Transverse colon (tissue), 4 donors: ENCODE measurements at regions of chr1 and their contacts with region 1.

Region 1: DNA sequence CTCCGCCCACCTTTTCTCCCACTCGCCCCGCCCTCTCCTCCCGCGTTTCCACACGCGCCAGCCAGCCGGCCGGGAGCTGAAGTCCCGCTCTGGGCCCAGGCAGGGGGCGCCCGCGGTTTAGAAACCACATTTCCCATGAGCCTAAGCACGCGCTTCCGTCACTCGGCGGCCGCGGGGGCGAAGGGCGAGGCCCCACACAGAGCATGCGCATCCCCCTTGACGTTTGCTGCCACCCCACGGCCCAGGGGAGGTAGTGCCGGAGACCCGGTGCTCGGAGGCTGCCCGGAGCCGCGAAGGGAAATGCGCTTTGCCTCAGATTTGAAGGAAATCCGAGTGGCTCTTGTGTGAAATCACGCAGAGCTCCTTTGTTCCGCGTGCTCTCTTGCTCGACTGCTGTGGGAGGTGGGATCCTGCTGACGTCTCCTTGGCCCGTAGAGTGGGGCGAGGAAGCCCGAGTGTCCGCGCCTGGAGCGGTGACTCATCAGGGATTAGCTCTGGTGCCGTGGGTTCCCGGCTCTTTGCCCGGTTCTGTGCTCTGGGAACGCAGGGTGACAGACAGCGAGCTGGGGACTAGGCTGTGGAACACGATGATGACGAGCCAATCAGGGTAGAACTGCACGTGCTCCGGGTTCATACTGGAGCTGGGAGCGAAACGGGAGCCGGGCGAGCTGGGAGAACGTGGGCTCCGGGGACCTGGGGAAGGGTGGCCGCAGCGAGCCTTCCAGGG is 407 bp upstream of the B3GALNT2 start:
- DNase-seq: peak; percentile 100
- H3K4me3 ChIP-seq: peak overlapping the region; percentile 53 to 86 (median 78)
- H3K27ac ChIP-seq: peak overlapping the region; percentile 94 to 100 (median 98)
- H3K4me1 ChIP-seq: peaks cover 0 to 26% (median 22%) of the 10 kb centered on the region in 4 donors
- H3K27me3 ChIP-seq: no peaks in the 10 kb centered on the region
- CTCF ChIP-seq: peak; percentile 70 to 98 (median 83)
- EP300 ChIP-seq: peak; percentile 9
- POLR2A ChIP-seq: peak; percentile 74

Region 2: GRCh38 chr1:234608025-234608862 is 896.4 kb before region 1 on chr1:
- in situ Hi-C with region 1: no loop called
- intact Hi-C with region 1: no loop called
- DNase-seq: peak; percentile 84
- H3K4me3 ChIP-seq: peak overlapping the region; percentile 79 to 91 (median 84)
- H3K27ac ChIP-seq: peak overlapping the region; percentile 98 to 100 (median 99)
- H3K4me1 ChIP-seq: peaks cover 18 to 40% (median 34%) of the 10 kb centered on the region in 4 donors
- H3K27me3 ChIP-seq: no peaks in the 10 kb centered on the region
- CTCF ChIP-seq: peak in 3 of 5 experiments; percentile 0 to 38 (median 30)
- EP300 ChIP-seq: peak; percentile 5
- POLR2A ChIP-seq: peak; percentile 86

Region 3: DNA sequence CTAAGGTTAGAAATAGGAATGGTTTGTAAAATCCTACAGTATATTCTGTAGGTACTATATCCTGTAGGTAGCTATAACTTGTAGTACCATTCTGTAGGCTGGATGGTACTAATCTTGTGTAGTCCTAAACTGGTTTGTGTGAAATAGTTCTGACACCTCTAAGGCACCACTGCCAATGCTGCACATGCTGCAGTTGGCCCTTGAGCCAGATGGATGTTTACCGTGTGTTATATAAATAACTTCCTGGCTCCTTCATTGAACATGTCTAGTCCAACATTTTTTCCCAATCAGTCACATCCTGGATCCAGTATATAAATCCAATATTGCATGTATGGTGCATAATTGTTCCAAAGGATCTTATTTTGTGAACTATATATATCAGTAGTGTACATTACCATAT is 234.5 kb after region 1 on chr1:
- in situ Hi-C with region 1: loop called in 1 of 4 experiments (anchors 25 kb)
- intact Hi-C with region 1: no loop called
- DNase-seq: no peak
- H3K4me3 ChIP-seq: no peak overlapping the region
- H3K27ac ChIP-seq: no peak overlapping the region
- H3K4me1 ChIP-seq: no peaks in the 10 kb centered on the region
- H3K27me3 ChIP-seq: no peaks in the 10 kb centered on the region
- CTCF ChIP-seq: no peak
- EP300 ChIP-seq: no peak
- POLR2A ChIP-seq: no peak

Region 4: DNA sequence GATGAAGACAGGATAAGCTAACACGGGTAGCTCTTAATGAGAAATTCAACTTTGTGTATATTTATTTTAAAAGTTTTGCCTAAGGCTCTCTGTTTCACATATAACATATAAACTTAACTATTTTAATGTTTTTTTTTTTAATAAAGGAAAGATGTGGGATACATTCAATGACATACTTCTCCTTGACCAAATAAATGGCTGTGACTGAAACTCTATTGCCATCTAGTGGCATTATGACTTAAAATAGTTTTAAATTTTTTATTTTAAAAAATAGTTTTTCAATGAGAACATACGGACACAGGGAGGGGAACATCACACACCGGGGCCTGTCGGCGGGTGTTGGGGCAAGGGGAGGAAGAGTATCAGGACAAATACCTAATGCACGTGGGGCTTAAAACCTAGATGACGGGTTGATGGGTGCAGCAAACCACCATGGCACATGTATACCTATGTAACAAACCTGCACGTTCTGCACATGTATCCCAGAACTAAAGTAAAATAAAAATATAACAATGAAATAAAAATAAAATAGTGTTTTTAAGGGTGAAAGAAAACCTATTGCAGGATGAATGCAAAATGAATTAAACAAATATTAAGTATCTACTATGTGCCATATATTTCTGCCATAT is 278.6 kb after region 1 on chr1:
- in situ Hi-C with region 1: loop called in 2 of 4 experiments (anchors 25 kb)
- intact Hi-C with region 1: no loop called
- DNase-seq: no peak
- H3K4me3 ChIP-seq: no peak overlapping the region
- H3K27ac ChIP-seq: no peak overlapping the region
- H3K4me1 ChIP-seq: no peaks in the 10 kb centered on the region
- H3K27me3 ChIP-seq: no peaks in the 10 kb centered on the region
- CTCF ChIP-seq: peak; percentile 28 to 49 (median 41)
- EP300 ChIP-seq: no peak
- POLR2A ChIP-seq: no peak